MCF 10A (cell line): ENCODE measurements at regions of chr12 and their contacts with region 1.

Region 1: GRCh38 chr12:44942714-44943113 is 66.6 kb upstream of the NELL2 start:
- DNase-seq: no peak
- H3K4me3 Mint-ChIP-seq: no peak overlapping the region
- H3K27ac Mint-ChIP-seq: no peak overlapping the region
- H3K4me1 Mint-ChIP-seq: no peaks in the 10 kb centered on the region
- H3K27me3 Mint-ChIP-seq: peaks cover 48% of the 10 kb centered on the region
- CTCF ChIP-seq: no peak

Region 2: GRCh38 chr12:43957732-43958372 is 984.9 kb before region 1 on chr12:
- CTCF ChIA-PET with region 1: interaction called, 3 read pairs
- POLR2A ChIA-PET with region 1: no interaction called
- intact Hi-C with region 1: loop called (anchors 5 kb)
- DNase-seq: peak; percentile 66
- H3K4me3 Mint-ChIP-seq: no peak overlapping the region
- H3K27ac Mint-ChIP-seq: no peak overlapping the region
- H3K4me1 Mint-ChIP-seq: no peaks in the 10 kb centered on the region
- H3K27me3 Mint-ChIP-seq: no peaks in the 10 kb centered on the region
- CTCF ChIP-seq: peak; percentile 49

Region 3: DNA sequence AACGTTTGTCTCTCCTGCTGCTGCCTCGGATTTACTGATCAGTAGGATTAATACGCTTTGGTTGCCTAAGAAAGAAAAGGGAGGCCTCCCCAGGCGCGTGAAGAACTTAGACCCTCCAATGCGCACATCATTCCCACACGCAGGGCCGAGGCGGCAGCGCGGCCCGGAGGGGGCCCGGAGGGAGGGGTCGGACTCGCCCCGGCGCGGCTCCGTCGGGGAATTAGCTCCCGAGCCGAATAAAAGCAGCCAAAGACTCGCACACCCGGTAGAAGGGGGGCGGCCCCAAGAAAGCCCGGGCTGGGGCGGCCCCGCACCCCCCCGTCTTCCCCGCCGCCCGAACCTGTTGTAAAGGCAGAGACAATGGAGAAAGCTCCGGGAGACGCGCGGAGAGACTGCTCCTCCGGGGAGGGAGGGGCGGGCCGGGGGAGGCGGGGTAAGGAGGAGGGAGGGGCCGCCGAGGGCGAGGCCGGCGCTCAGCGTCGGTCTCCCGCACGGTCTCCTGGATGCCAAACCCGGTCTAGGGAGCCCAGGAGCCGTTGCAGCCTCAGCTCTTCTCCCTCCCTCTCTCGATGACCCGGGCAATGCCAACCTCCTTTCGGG is 66.7 kb before region 1 on chr12 and contains the start of gene NELL2:
- CTCF ChIA-PET with region 1: no interaction called
- POLR2A ChIA-PET with region 1: no interaction called
- intact Hi-C with region 1: no loop called
- DNase-seq: peak; percentile 8
- H3K4me3 Mint-ChIP-seq: peak within 1 kb of the TSS; percentile 50
- H3K27ac Mint-ChIP-seq: no peak within 1 kb of the TSS
- H3K4me1 Mint-ChIP-seq: peaks cover 9% of the 10 kb centered on the region
- H3K27me3 Mint-ChIP-seq: peaks cover 96% of the 10 kb centered on the region
- CTCF ChIP-seq: no peak
- total RNA-seq, gene NELL2: not detected in 2 replicates

Region 4: DNA sequence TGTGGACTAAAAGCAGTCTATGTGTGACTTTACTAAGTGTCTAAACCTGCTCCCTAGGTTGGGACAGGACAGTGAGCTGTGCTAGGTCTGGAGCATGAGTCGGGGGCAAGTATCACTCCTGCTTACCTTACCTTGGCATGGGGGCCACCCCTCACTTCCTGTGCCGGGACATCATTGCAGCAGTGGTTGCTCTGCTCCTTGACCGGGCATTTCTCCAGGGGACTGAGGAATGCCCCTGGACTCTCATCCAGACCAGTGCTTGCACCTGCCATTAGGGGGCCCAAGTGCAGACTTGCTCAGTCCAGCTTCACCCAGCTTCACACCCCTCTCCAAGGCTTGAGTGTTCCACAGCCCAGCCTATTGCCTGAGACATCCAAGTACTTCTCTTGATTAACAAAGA is 18.1 kb after region 1 on chr12:
- CTCF ChIA-PET with region 1: interaction called, 16 read pairs
- POLR2A ChIA-PET with region 1: no interaction called
- intact Hi-C with region 1: no loop called
- DNase-seq: peak; percentile 9
- H3K4me3 Mint-ChIP-seq: no peak overlapping the region
- H3K27ac Mint-ChIP-seq: no peak overlapping the region
- H3K4me1 Mint-ChIP-seq: no peaks in the 10 kb centered on the region
- H3K27me3 Mint-ChIP-seq: peaks cover 28% of the 10 kb centered on the region
- CTCF ChIP-seq: no peak

Region 5: GRCh38 chr12:45122768-45123380 is 180.2 kb after region 1 on chr12:
- CTCF ChIA-PET with region 1: interaction called, 3 read pairs
- POLR2A ChIA-PET with region 1: no interaction called
- intact Hi-C with region 1: loop called (anchors 5 kb)
- DNase-seq: peak; percentile 50
- H3K4me3 Mint-ChIP-seq: no peak overlapping the region
- H3K27ac Mint-ChIP-seq: no peak overlapping the region
- H3K4me1 Mint-ChIP-seq: no peaks in the 10 kb centered on the region
- H3K27me3 Mint-ChIP-seq: peaks cover 38% of the 10 kb centered on the region
- CTCF ChIP-seq: peak; percentile 49

Region 6: DNA sequence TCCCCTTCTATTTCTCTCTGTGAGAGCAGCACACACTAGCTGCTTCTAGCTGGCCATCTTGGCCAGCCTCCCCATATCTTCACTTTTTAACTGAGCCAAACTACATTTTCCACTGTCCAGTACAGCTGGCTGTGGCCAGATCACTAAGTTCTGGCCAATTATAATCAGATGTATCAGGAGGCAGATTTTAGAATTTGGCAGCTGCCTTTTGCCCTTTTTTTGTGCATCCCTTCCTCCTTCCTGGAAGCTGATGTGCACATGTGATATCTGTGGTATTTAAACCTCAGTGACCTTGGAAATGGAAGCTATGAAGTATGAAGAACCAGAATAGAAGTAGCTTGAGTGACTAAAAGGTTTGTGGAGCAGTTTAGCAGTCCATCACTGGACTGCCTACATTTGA is 223.3 kb after region 1 on chr12:
- CTCF ChIA-PET with region 1: no interaction called
- POLR2A ChIA-PET with region 1: no interaction called
- intact Hi-C with region 1: no loop called
- DNase-seq: no peak
- H3K4me3 Mint-ChIP-seq: no peak overlapping the region
- H3K27ac Mint-ChIP-seq: no peak overlapping the region
- H3K4me1 Mint-ChIP-seq: no peaks in the 10 kb centered on the region
- H3K27me3 Mint-ChIP-seq: peaks cover 19% of the 10 kb centered on the region
- CTCF ChIP-seq: no peak